ENCODE measurements at regions of chr2 and their contacts with region 1.

Region 1: GRCh38 chr2:238060542-238061314 is at the start of gene SCLY:
- DNase-seq: peak; percentile 92 to 99 (median 96)
- ATAC-seq: peak; percentile 97
- H3K4me3 ChIP-seq: peak within 1 kb of the TSS; percentile 93
- H3K4me3 Mint-ChIP-seq: peak within 1 kb of the TSS; percentile 85
- H3K27ac ChIP-seq: peak within 1 kb of the TSS; percentile 77 to 81
- H3K27ac Mint-ChIP-seq: peak within 1 kb of the TSS; percentile 67
- H3K4me1 ChIP-seq: peaks cover 21% of the 10 kb centered on the region
- H3K4me1 Mint-ChIP-seq: peaks cover 35% of the 10 kb centered on the region
- H3K27me3 ChIP-seq: no peaks in the 10 kb centered on the region
- H3K27me3 Mint-ChIP-seq: peaks cover 17% of the 10 kb centered on the region
- CTCF ChIP-seq: no peak
- total RNA-seq, gene SCLY: 8.9 to 9.6 TPM

Region 2: GRCh38 chr2:237085248-237086221 is 975.2 kb before region 1 on chr2 and contains the start of gene COPS8:
- CTCF ChIA-PET with region 1: no interaction called
- POLR2A ChIA-PET with region 1: no interaction called
- intact Hi-C with region 1: loop called in 1 of 2 experiments (anchors 5 kb)
- DNase-seq: peak; percentile 79 to 95 (median 88)
- ATAC-seq: peak; percentile 97
- H3K4me3 ChIP-seq: peak within 1 kb of the TSS; percentile 95
- H3K4me3 Mint-ChIP-seq: peak within 1 kb of the TSS; percentile 99
- H3K27ac ChIP-seq: peak within 1 kb of the TSS; percentile 76 to 85
- H3K27ac Mint-ChIP-seq: peak within 1 kb of the TSS; percentile 98
- H3K4me1 ChIP-seq: peaks cover 9% of the 10 kb centered on the region
- H3K4me1 Mint-ChIP-seq: peaks cover 35% of the 10 kb centered on the region
- H3K27me3 ChIP-seq: no peaks in the 10 kb centered on the region
- H3K27me3 Mint-ChIP-seq: no peaks in the 10 kb centered on the region
- CTCF ChIP-seq: peak; percentile 47
- total RNA-seq, gene COPS8: 47.9 to 51.7 TPM

Region 3: GRCh38 chr2:237691908-237692600 is 368.7 kb before region 1 on chr2:
- CTCF ChIA-PET with region 1: no interaction called
- POLR2A ChIA-PET with region 1: interaction called, 3 read pairs
- intact Hi-C with region 1: loop called in 1 of 2 experiments (anchors 10 kb)
- DNase-seq: peak; percentile 90 to 98 (median 95)
- ATAC-seq: peak; percentile 48
- H3K4me3 ChIP-seq: peak overlapping the region; percentile 90
- H3K4me3 Mint-ChIP-seq: peak overlapping the region; percentile 89
- H3K27ac ChIP-seq: peak overlapping the region; percentile 87 to 96
- H3K27ac Mint-ChIP-seq: peak overlapping the region; percentile 93
- H3K4me1 ChIP-seq: peaks cover 77% of the 10 kb centered on the region
- H3K4me1 Mint-ChIP-seq: peaks cover 74% of the 10 kb centered on the region
- H3K27me3 ChIP-seq: no peaks in the 10 kb centered on the region
- H3K27me3 Mint-ChIP-seq: no peaks in the 10 kb centered on the region
- CTCF ChIP-seq: no peak

Region 4: DNA sequence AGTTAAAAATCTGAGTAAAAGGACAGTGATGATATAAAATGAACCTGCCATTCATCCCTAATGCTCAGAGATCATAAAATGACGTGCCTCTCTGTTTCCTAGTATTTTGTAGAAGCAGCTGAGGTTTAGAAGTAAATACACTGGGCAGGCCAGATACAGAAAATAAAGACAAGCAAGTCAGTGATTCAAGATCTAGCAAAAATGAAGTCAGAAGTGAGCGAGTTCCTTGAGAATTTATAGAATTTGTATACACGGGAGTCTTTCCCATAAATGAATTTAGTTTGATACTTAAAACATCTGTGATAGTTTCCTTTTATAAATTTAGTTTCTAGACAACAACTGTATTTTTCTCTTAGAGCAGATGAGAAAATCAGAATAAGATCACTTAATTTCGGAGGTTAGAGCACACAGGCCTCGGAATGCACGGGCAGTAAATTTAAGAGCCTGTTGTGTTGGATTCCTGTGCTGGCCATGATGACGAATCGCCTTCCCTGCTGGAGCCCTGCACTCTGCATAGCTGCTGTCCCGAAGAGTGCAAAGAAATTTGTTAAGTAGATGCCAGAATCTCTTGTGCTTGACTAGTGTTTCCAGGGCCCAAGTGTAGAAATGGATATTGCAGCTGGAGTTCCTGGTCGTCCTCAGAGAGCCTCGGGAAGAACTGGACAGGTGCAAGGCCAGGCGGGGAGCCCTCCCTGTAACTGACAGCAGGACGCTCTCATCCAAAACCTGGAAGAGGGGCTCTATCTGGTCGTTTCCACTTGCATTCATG is 345.9 kb before region 1 on chr2:
- CTCF ChIA-PET with region 1: no interaction called
- POLR2A ChIA-PET with region 1: no interaction called
- intact Hi-C with region 1: no loop called
- DNase-seq: no peak
- ATAC-seq: no peak
- H3K4me3 ChIP-seq: no peak overlapping the region
- H3K4me3 Mint-ChIP-seq: no peak overlapping the region
- H3K27ac ChIP-seq: no peak overlapping the region
- H3K27ac Mint-ChIP-seq: peak overlapping the region; percentile 46
- H3K4me1 ChIP-seq: peaks cover 34% of the 10 kb centered on the region
- H3K4me1 Mint-ChIP-seq: peaks cover 81% of the 10 kb centered on the region
- H3K27me3 ChIP-seq: no peaks in the 10 kb centered on the region
- H3K27me3 Mint-ChIP-seq: no peaks in the 10 kb centered on the region
- CTCF ChIP-seq: no peak

Region 5: DNA sequence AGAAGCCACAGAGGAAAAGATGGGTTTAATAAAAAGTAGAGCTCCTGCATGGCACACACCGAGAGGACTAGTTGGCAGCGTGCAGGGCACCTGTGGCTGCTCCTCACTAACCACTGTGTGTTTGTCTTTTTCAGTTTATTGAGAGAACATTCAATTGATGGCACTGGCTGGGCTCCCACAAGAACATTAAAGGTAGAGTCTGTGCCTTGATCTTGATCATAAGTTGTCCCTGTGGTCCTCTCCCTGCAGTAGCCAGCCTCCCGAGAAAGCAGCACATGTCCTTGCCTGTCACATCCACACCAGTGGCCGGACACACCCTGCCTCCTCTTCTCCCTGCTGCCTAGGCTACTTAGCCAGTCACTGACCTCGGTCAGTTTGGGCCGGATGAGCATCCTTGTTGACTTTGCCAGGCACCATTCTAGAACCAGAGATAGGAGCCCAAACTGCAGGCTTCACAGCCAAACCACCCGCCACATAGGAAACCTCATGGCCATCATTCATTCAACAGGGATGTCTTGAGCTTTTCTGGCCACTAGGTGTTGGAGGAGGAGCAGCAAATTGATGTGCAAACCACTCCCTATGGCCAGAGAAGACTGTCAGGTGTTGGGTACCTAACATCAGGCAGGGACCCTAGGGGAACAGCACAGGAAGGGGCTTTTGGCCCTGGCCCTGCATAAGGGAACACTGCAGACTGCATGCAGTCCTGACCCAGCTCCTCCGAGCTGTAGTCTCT is 30.1 kb before region 1 on chr2:
- CTCF ChIA-PET with region 1: no interaction called
- POLR2A ChIA-PET with region 1: no interaction called
- intact Hi-C with region 1: no loop called
- DNase-seq: no peak
- ATAC-seq: no peak
- H3K4me3 ChIP-seq: no peak overlapping the region
- H3K4me3 Mint-ChIP-seq: no peak overlapping the region
- H3K27ac ChIP-seq: no peak overlapping the region
- H3K27ac Mint-ChIP-seq: no peak overlapping the region
- H3K4me1 ChIP-seq: no peaks in the 10 kb centered on the region
- H3K4me1 Mint-ChIP-seq: no peaks in the 10 kb centered on the region
- H3K27me3 ChIP-seq: no peaks in the 10 kb centered on the region
- H3K27me3 Mint-ChIP-seq: no peaks in the 10 kb centered on the region
- CTCF ChIP-seq: no peak

Region 6: GRCh38 chr2:238203094-238203972 is 142.6 kb after region 1 on chr2 and contains the start of gene ILKAP:
- CTCF ChIA-PET with region 1: no interaction called
- POLR2A ChIA-PET with region 1: interaction called, 3 read pairs
- intact Hi-C with region 1: loop called in 1 of 2 experiments (anchors 5 kb)
- DNase-seq: peak; percentile 83 to 97 (median 89)
- ATAC-seq: peak; percentile 97
- H3K4me3 ChIP-seq: peak within 1 kb of the TSS; percentile 70
- H3K4me3 Mint-ChIP-seq: peak within 1 kb of the TSS; percentile 95
- H3K27ac ChIP-seq: peak within 1 kb of the TSS; percentile 77 to 79
- H3K27ac Mint-ChIP-seq: peak within 1 kb of the TSS; percentile 91
- H3K4me1 ChIP-seq: peaks cover 34% of the 10 kb centered on the region
- H3K4me1 Mint-ChIP-seq: peaks cover 40% of the 10 kb centered on the region
- H3K27me3 ChIP-seq: no peaks in the 10 kb centered on the region
- H3K27me3 Mint-ChIP-seq: no peaks in the 10 kb centered on the region
- CTCF ChIP-seq: no peak
- total RNA-seq, gene ILKAP: 133 to 143 TPM

Region 7: GRCh38 chr2:238231251-238231793 is 170.6 kb after region 1 on chr2:
- CTCF ChIA-PET with region 1: no interaction called
- POLR2A ChIA-PET with region 1: no interaction called
- intact Hi-C with region 1: loop called in 1 of 2 experiments (anchors 2 kb)
- DNase-seq: peak; percentile 69 to 92 (median 77)
- ATAC-seq: peak; percentile 89
- H3K4me3 ChIP-seq: peak overlapping the region; percentile 59
- H3K4me3 Mint-ChIP-seq: peak overlapping the region; percentile 78
- H3K27ac ChIP-seq: no peak overlapping the region
- H3K27ac Mint-ChIP-seq: no peak overlapping the region
- H3K4me1 ChIP-seq: peaks cover 25% of the 10 kb centered on the region
- H3K4me1 Mint-ChIP-seq: peaks cover 23% of the 10 kb centered on the region
- H3K27me3 ChIP-seq: peaks cover 0 to 8% of the 10 kb centered on the region in 2 experiments
- H3K27me3 Mint-ChIP-seq: peaks cover 19% of the 10 kb centered on the region
- CTCF ChIP-seq: no peak

Region 8: DNA sequence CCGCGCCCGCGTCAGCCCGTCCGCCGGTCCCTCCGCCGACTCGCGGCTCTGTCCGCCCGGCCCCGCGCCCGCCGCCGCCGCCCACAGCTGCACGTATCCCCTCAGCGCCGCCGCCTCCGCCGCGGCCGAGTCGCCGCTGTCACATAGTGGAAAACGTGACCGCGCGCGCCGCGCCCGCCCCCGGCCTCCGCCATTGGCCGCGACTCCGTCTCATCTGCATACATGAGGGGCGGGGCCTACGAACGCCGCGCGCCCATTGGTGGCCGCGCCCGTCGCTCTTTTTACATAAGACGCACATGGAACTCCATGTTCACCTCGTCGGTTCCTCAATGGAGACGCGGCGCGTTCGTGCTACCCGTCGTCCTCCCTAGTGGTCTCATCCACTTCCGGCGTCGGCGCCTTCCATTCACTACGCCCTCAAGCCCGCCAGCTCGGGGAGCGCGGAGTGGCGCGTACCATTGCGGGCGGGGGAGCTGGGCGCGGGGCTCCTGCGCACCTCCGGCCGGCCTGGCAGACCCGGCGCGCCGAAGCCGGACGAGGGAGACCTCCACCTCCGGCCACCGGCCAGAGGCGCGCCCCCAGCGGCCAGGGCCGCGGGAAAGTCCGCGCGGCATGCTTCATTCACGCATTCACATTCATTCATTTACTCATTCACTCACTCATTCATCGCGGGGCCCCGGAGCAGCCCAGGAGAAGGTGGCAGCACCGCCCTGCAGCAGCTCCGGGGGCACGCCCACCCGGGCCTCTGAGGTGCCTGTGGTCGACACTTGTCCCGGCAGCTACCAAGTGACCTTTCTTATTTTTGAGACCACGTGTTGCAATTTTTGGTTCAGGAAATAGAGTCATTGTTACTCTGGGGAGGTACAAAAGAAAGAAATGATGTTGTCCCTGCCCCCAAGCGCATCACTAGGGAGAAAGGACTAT is 228.2 kb after region 1 on chr2:
- CTCF ChIA-PET with region 1: no interaction called
- POLR2A ChIA-PET with region 1: interaction called, 10 read pairs
- intact Hi-C with region 1: loop called in 1 of 2 experiments (anchors 5 kb)
- DNase-seq: peak; percentile 95 to 99 (median 97)
- ATAC-seq: peak; percentile 89
- H3K4me3 ChIP-seq: peak overlapping the region; percentile 97
- H3K4me3 Mint-ChIP-seq: peak overlapping the region; percentile 99
- H3K27ac ChIP-seq: peak overlapping the region; percentile 51 to 81
- H3K27ac Mint-ChIP-seq: peak overlapping the region; percentile 99
- H3K4me1 ChIP-seq: peaks cover 38% of the 10 kb centered on the region
- H3K4me1 Mint-ChIP-seq: peaks cover 36% of the 10 kb centered on the region
- H3K27me3 ChIP-seq: no peaks in the 10 kb centered on the region
- H3K27me3 Mint-ChIP-seq: no peaks in the 10 kb centered on the region
- CTCF ChIP-seq: no peak

Region 9: GRCh38 chr2:238426568-238427434 is 366.1 kb after region 1 on chr2 and contains the start of gene ASB1:
- CTCF ChIA-PET with region 1: no interaction called
- POLR2A ChIA-PET with region 1: no interaction called
- intact Hi-C with region 1: loop called in 1 of 2 experiments (anchors 2 kb)
- DNase-seq: peak; percentile 55 to 89 (median 76)
- ATAC-seq: peak; percentile 69
- H3K4me3 ChIP-seq: peak within 1 kb of the TSS; percentile 88
- H3K4me3 Mint-ChIP-seq: peak within 1 kb of the TSS; percentile 89
- H3K27ac ChIP-seq: peak within 1 kb of the TSS; percentile 74 to 75
- H3K27ac Mint-ChIP-seq: peak within 1 kb of the TSS; percentile 90
- H3K4me1 ChIP-seq: peaks cover 38% of the 10 kb centered on the region
- H3K4me1 Mint-ChIP-seq: peaks cover 56% of the 10 kb centered on the region
- H3K27me3 ChIP-seq: no peaks in the 10 kb centered on the region
- H3K27me3 Mint-ChIP-seq: no peaks in the 10 kb centered on the region
- CTCF ChIP-seq: no peak
- total RNA-seq, gene ASB1: 14.3 to 19.6 TPM